ENCODE measurements at regions of chr12 and their contacts with region 1.

Region 1: DNA sequence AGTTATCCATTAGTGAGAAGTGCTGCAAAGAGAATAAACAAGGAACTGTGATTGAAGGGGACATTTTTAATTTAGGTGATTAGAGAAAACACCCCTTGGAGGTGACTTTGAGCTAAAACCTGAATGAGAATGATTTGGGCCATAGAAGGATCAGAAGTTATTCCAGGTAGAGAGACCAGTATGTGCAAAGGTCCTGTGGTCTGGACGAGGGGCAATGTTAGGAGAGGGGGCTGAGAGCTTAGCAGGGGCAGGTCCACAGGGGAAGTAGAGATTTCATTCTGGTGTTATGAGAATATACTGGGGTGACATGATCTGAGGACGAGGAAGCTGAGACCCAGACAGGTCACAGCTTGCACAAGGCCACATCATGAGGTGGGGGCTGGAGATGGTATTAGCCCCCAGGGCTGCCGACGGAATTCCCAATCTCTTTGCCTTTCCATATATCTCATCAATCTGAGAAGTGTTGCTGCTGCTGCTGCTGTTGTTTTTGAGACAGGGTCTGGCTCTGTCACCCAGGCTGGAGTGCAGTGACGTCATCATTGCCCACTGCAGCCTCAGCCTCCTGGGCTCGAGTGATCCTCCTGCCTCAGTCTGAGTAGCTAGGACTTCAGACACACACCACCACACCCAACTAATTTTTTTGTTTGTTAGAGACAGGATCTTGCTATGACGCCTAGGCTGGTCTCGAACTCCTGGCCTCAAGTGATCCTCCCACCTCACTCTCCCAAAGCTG is 55.6 kb downstream of the KCTD10 start:
- DNase-seq: no peak
- H3K4me3 ChIP-seq: no peak overlapping the region
- H3K27ac ChIP-seq: no peak overlapping the region
- H3K27me3 ChIP-seq: peaks cover 14% of the 10 kb centered on the region
- CTCF ChIP-seq: no peak

Region 2: GRCh38 chr12:109052414-109053323 is 368.9 kb before region 1 on chr12 and contains the start of gene USP30:
- CTCF ChIA-PET with region 1: no interaction called
- POLR2A ChIA-PET with region 1: no interaction called
- DNase-seq: peak; percentile 72
- H3K4me3 ChIP-seq: peak within 1 kb of the TSS; percentile 93
- H3K27ac ChIP-seq: peak within 1 kb of the TSS; percentile 21
- H3K27me3 ChIP-seq: no peaks in the 10 kb centered on the region
- CTCF ChIP-seq: no peak
- polyA plus RNA-seq, gene USP30: 16.1 and 18.2 TPM in 2 replicates

Region 3: GRCh38 chr12:109393437-109394345 is 27.8 kb before region 1 on chr12:
- CTCF ChIA-PET with region 1: interaction called, 18 read pairs
- POLR2A ChIA-PET with region 1: no interaction called
- DNase-seq: peak; percentile 16
- H3K4me3 ChIP-seq: no peak overlapping the region
- H3K27ac ChIP-seq: no peak overlapping the region
- H3K27me3 ChIP-seq: peaks cover 2% of the 10 kb centered on the region
- CTCF ChIP-seq: peak; percentile 97

Region 4: DNA sequence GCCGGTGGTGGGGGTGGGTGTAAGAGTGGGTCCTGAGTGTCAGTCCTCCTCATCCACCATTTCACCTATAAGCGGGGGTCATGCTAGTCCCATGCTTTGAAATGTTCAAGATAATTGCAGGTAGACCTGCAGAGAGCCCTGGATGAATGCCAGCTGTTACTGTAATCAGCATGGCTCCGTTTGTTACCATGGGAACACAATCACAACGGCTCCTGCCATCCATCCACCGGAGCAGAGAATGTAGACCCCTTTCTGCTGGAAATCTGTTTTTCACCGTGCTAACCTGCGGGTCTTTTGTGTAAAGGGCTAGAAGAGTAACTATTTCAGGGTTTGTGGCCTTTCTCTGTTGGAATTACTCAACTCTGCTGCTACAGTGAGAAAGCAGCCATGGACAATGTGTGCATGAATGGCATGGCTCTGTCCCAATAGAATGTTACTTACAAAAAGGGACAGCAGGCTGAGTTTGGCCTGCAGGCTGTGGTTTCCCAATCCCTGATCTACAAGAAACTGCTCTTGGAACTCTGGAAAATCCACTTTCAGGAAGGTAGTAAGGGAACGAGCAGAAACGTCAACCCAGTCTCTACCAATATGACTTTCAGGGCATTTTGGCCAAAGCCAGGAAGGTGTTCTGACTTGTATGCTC is 19.5 kb after region 1 on chr12:
- CTCF ChIA-PET with region 1: no interaction called
- POLR2A ChIA-PET with region 1: no interaction called
- DNase-seq: no peak
- H3K4me3 ChIP-seq: no peak overlapping the region
- H3K27ac ChIP-seq: no peak overlapping the region
- H3K27me3 ChIP-seq: no peaks in the 10 kb centered on the region
- CTCF ChIP-seq: no peak

Region 5: GRCh38 chr12:109523071-109523470 is 101.5 kb after region 1 on chr12:
- CTCF ChIA-PET with region 1: no interaction called
- POLR2A ChIA-PET with region 1: no interaction called
- DNase-seq: no peak
- H3K4me3 ChIP-seq: no peak overlapping the region
- H3K27ac ChIP-seq: no peak overlapping the region
- H3K27me3 ChIP-seq: no peaks in the 10 kb centered on the region
- CTCF ChIP-seq: no peak

Region 6: GRCh38 chr12:109612975-109613502 is 191.5 kb after region 1 on chr12:
- CTCF ChIA-PET with region 1: no interaction called
- POLR2A ChIA-PET with region 1: no interaction called
- DNase-seq: no peak
- H3K4me3 ChIP-seq: no peak overlapping the region
- H3K27ac ChIP-seq: no peak overlapping the region
- H3K27me3 ChIP-seq: peaks cover 63% of the 10 kb centered on the region
- CTCF ChIP-seq: peak; percentile 42

Measured in AG04450 (cell line).